Tibial artery (tissue), 4 donors: ENCODE measurements at regions of chr14 and their contacts with region 1.

Region 1: DNA sequence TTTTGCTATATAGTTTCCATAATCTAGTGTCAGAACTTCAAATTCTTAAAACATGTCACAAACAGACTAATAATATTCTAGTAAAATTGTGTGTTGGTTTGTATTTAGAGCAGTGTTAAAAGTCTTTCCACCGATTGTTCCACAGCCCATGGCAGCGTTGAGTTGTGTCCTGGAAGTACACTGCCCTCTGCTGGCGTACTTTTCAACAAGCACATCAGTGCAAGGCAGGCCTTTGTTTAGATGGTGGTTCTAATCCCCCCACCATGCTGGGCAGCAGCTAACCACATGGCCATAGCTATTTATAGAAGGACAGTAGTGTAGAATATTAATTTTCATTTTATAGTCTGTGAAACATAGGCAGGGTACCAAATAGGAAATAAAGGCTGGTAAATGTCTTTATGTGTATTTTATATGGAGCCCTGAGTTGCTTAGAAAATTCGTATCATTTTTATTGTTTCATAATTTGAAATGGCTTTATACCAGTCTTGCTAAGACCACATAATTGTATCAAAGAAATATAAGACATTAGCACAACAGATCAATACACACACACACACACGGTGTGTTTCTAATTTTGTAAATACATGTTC is 235.4 kb downstream of the SEC23A start:
- DNase-seq: peak; percentile 77 to 78
- H3K4me3 ChIP-seq: no peak overlapping the region
- H3K27ac ChIP-seq: no peak overlapping the region
- H3K4me1 ChIP-seq: peaks cover 0 to 20% (median 8%) of the 10 kb centered on the region in 4 donors
- H3K27me3 ChIP-seq: no peaks in the 10 kb centered on the region
- CTCF ChIP-seq: peak; percentile 73 to 79

Region 2: GRCh38 chr14:37903343-37904191 is 964.1 kb before region 1 on chr14:
- intact Hi-C with region 1: loop called (anchors 10 kb)
- DNase-seq: no peak
- H3K4me3 ChIP-seq: no peak overlapping the region
- H3K27ac ChIP-seq: no peak overlapping the region
- H3K4me1 ChIP-seq: peaks cover 0 to 20% (median 0%) of the 10 kb centered on the region in 4 donors
- H3K27me3 ChIP-seq: peaks cover 0 to 2% of the 10 kb centered on the region in 2 donors
- CTCF ChIP-seq: peak; percentile 44 to 51

Region 3: DNA sequence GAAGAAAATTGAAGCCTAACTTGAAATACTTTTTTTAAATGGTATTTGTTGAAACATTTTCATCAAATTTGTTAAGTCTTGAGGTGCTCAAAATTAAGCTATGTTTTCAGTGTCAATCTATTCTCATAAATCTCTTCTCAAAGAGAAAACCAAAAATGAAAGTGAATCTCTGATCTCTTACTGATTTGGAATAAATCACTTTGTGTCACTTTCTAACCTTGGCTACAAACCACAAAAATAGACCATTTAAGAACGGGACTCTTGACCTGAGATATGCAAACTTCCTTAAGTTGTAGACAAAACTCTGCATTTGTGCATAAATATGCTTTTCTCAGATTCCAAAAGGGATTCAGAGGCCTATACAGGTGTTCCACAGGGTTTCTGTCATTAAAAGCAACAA is 42.4 kb after region 1 on chr14:
- intact Hi-C with region 1: no loop called
- DNase-seq: no peak
- H3K4me3 ChIP-seq: no peak overlapping the region
- H3K27ac ChIP-seq: no peak overlapping the region
- H3K4me1 ChIP-seq: no peaks in the 10 kb centered on the region
- H3K27me3 ChIP-seq: no peaks in the 10 kb centered on the region
- CTCF ChIP-seq: no peak